ENCODE measurements at regions of chr19 and their contacts with region 1.

Region 1: DNA sequence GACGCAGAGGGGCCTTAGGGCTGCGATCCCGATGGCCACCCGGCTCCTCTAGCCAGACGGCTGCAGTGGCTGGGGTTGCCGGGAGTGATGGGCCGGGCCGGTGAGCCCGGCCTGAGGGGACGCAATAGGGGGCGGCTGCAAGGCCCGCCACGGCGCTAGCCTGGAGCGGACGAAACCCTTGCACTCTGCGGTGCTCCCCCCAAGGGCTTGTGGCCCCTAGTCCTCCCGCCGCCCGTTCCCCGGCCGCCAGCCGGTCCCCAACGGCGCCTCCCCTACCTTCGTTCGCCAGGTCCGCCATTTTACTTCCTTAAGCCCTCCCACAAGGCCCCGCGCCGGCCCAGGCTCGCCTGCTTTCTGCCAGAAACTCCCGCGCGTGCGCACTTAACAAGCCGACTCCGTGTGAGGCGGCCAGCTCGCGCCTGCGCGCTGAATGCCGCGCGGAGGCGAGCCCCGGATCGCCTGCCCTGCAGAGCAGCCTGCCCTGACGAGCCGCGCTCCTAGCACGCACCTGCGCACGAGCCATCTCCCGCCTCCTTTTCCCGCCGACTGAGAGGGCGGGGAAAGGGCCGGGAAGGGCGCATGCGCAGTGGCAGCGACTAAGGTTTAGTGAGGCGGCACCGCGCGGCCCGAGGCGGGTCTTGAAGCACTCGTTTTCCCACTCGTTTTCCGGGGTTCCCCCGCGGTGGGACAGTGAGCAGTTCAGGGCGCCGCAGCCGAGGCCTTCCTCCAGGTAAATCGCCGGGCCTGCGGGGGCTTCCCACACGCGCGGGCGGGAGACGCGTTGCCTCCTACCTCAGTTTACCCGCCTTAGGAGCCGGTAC is at the start of gene RANBP3:
- DNase-seq: peak; percentile 97 to 99
- ATAC-seq: peak; percentile 95 to 96
- H3K4me3 ChIP-seq: peak within 1 kb of the TSS; percentile 73 to 100 (median 88)
- H3K27ac ChIP-seq: peak within 1 kb of the TSS; percentile 84 to 93 (median 90)
- H3K4me1 ChIP-seq: peaks cover 29 to 40% of the 10 kb centered on the region in 2 donors
- H3K27me3 ChIP-seq: no peaks in the 10 kb centered on the region
- CTCF ChIP-seq: no peak
- POLR2A ChIP-seq: peak; percentile 49 to 63
- total RNA-seq, gene RANBP3: 37.4 to 74.3 (median 61.3) TPM

Region 2: DNA sequence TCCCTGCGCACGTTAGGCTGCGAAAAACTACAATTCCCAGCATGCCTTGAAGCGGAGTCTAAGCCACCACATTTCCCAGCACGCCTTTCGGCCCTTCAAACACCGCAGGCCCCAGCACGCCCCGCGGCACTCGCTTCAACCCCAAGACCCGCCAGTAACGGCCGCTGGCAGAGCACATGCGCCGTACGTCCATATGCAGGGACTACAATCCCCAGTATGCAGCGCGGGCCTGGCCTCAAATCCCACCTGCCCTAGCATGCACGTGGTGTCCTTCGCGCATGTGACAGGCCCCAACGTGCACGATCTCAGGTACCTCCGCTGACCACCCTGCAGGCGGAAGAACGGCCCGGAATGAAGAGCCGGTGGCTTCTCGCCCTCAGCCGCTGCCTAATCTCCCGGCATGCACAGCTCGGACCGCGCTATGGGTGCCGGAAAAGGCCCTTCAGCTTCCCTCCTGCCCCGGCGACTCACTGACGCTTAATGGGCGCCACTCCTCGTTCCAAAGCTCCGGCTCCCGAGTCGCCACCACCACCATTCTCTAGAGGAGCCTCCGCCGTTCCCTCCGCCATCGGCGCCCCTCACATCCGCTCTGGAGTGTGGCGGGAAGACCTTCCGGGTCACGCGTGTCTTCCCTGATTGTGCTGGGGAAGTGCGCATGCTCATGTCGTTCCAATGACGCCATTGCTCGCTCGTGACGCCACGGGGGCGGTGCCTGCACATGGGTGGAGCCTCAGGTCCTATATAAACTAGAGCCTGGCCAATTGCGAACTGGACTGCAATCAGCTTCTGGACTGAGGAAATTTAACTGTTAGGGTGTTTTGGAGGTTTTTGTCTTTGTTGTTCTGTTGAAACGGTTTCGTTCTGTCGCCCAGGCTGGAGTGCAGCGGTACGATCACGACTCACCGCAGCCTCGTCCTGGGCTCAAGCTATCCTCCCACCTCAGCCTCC is 187.1 kb before region 1 on chr19 and contains the start of gene DUS3L:
- in situ Hi-C with region 1: no loop called
- intact Hi-C with region 1: loop called (anchors 5 kb)
- DNase-seq: peak; percentile 96 to 98
- ATAC-seq: peak; percentile 95 to 96
- H3K4me3 ChIP-seq: peak within 1 kb of the TSS; percentile 78 to 94 (median 86)
- H3K27ac ChIP-seq: peak within 1 kb of the TSS; percentile 96 to 99 (median 98)
- H3K4me1 ChIP-seq: peaks cover 7 to 8% of the 10 kb centered on the region in 2 donors
- H3K27me3 ChIP-seq: peaks cover 0 to 4% (median 0%) of the 10 kb centered on the region in 3 donors
- CTCF ChIP-seq: peak in 1 of 5 experiments; percentile 24
- POLR2A ChIP-seq: peak; percentile 72 to 73
- total RNA-seq, gene DUS3L: 19.5 to 45.9 (median 25.0) TPM

Region 3: GRCh38 chr19:5904352-5905113 is 73.5 kb before region 1 on chr19 and contains the start of gene VMAC:
- in situ Hi-C with region 1: no loop called
- intact Hi-C with region 1: loop called (anchors 5 kb)
- DNase-seq: peak; percentile 100
- ATAC-seq: peak; percentile 81 to 88
- H3K4me3 ChIP-seq: peak within 1 kb of the TSS; percentile 68 to 100 (median 97)
- H3K27ac ChIP-seq: peak within 1 kb of the TSS; percentile 93 to 98 (median 94)
- H3K4me1 ChIP-seq: peaks cover 10 to 20% of the 10 kb centered on the region in 2 donors
- H3K27me3 ChIP-seq: no peaks in the 10 kb centered on the region
- CTCF ChIP-seq: no peak
- POLR2A ChIP-seq: peak in 1 of 2 donors; percentile 5
- total RNA-seq, gene VMAC: 0.46 to 3.0 (median 2.1) TPM

Region 4: DNA sequence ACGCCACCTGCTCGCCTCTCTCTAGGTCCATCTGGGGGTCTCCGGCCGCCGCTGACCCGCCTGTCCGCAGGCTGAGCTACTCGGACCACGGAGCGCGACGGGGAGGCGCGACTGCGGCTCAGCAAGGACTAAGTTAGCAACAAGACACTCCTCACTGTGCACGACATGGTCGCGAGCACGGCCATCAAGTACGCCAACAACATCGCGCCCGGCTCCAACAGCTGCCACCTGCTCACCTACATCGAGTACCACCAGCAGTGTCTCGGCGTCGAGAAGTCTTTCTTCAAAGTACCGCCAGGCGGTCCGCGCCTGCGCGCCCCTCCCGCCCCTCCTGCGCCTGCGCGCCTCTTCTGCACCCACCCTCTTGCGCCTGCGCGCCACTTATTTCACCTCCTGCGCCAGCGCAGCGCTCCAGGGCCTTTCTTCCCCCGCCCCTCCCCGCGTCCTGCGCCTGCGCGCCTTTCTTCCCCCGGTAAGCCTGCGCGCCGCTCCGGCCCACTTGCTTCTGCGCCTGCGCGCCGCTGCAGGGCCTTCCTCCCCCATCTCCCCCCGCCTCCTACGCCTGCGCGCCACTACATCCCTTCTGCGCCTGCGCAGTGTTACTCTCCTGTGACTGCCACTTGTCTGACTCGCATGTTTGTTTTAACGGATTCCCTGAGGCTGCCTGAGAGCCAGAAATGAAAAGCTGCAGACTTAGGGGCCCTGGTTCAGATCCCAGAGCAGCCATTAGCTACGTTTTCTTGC is 221.4 kb after region 1 on chr19:
- in situ Hi-C with region 1: no loop called
- intact Hi-C with region 1: loop called (anchors 5 kb)
- DNase-seq: peak; percentile 96 to 99
- ATAC-seq: peak; percentile 94 to 96
- H3K4me3 ChIP-seq: peak overlapping the region; percentile 62 to 85 (median 72)
- H3K27ac ChIP-seq: peak overlapping the region; percentile 69 to 87 (median 80)
- H3K4me1 ChIP-seq: peaks cover 11 to 13% of the 10 kb centered on the region in 2 donors
- H3K27me3 ChIP-seq: no peaks in the 10 kb centered on the region
- CTCF ChIP-seq: peak; percentile 46 to 75 (median 67)
- POLR2A ChIP-seq: no peak